MCF 10A (cell line): ENCODE measurements at regions of chr2 and their contacts with region 1.

Region 1: GRCh38 chr2:201118121-201118960 is 2.4 kb downstream of the CFLAR start:
- DNase-seq: peak; percentile 98
- H3K4me3 Mint-ChIP-seq: peak overlapping the region; percentile 93
- H3K27ac Mint-ChIP-seq: peak overlapping the region; percentile 98
- H3K4me1 Mint-ChIP-seq: peaks cover 31% of the 10 kb centered on the region
- H3K27me3 Mint-ChIP-seq: no peaks in the 10 kb centered on the region
- CTCF ChIP-seq: peak; percentile 36

Region 2: GRCh38 chr2:200888704-200889625 is 229.4 kb before region 1 on chr2 and contains the starts of genes NIF3L1 and PPIL3:
- CTCF ChIA-PET with region 1: no interaction called
- POLR2A ChIA-PET with region 1: interaction called, 18 read pairs
- intact Hi-C with region 1: no loop called
- DNase-seq: peak; percentile 98
- H3K4me3 Mint-ChIP-seq: peak within 1 kb of the TSS; percentile 98
- H3K27ac Mint-ChIP-seq: peak within 1 kb of the TSS; percentile 98
- H3K4me1 Mint-ChIP-seq: peaks cover 21% of the 10 kb centered on the region
- H3K27me3 Mint-ChIP-seq: no peaks in the 10 kb centered on the region
- CTCF ChIP-seq: no peak
- total RNA-seq, gene NIF3L1: 19.3 and 26.1 TPM in 2 replicates
- total RNA-seq, gene PPIL3: 33.9 and 35.4 TPM in 2 replicates

Region 3: DNA sequence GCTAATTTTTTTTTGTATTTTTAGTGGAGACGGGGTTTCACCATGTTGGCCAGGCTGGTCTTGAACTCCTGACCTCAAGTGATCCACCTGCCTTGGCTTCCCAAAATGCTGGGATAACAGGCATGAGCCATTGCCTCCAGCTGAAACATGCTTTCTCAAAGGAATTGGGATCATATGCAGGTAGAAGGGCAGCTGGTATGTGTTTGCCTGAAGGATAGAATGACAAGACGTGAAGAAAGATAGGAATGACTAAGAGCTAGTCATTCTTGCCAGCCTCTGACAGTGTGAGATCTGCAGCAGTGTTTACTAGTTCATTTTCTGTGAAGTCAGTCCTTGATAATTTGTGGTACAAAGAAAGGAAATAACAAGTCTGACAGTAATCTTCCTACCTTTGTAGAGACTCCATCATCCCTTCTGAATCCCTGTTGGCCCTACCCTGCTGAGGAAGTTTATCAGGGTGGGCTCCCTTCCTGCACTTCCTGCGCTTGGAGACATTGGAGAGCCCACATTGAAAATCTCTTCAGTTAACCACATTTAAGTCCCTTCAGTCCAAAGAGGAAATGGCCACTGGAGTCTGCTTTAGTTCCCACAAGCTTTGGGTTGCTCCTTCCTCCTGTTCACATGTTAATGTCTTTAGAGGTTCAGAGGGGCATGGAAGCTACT is 12.3 kb after region 1 on chr2:
- CTCF ChIA-PET with region 1: interaction called, 28 read pairs
- POLR2A ChIA-PET with region 1: interaction called, 10 read pairs
- intact Hi-C with region 1: no loop called
- DNase-seq: peak; percentile 78
- H3K4me3 Mint-ChIP-seq: no peak overlapping the region
- H3K27ac Mint-ChIP-seq: peak overlapping the region; percentile 63
- H3K4me1 Mint-ChIP-seq: peaks cover 48% of the 10 kb centered on the region
- H3K27me3 Mint-ChIP-seq: no peaks in the 10 kb centered on the region
- CTCF ChIP-seq: no peak

Region 4: GRCh38 chr2:201151127-201151981 is 33.0 kb after region 1 on chr2:
- CTCF ChIA-PET with region 1: interaction called, 35 read pairs
- POLR2A ChIA-PET with region 1: interaction called, 198 read pairs
- intact Hi-C with region 1: loop called (anchors 1 kb)
- DNase-seq: peak; percentile 72
- H3K4me3 Mint-ChIP-seq: peak overlapping the region; percentile 46
- H3K27ac Mint-ChIP-seq: peak overlapping the region; percentile 97
- H3K4me1 Mint-ChIP-seq: peaks cover 45% of the 10 kb centered on the region
- H3K27me3 Mint-ChIP-seq: no peaks in the 10 kb centered on the region
- CTCF ChIP-seq: no peak

Region 5: DNA sequence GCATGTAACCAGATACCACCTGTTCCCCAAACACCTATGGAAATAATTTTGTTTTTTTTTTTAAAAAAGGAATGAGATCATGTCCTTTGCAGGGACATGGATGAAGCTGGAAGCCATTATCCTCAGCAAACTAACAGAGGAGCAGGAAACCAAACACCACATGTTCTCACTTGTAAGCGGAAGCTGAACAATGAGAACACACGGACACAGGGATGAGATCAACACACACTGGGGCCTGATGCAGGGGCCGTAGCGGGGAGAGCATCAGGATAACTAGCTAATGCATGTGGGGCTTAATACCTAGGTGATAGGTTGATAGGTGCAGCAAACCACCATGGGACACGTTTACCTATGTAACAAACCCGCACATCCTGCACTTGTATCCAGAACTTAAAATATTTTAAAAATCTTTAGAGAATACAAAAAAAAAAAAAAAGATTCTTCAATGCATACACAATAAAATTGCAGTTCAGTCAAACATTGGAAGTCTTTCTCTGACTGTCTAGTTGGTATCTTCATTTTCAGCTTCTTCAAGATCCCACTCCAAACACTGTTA is 53.0 kb after region 1 on chr2:
- CTCF ChIA-PET with region 1: interaction called, 6 read pairs
- POLR2A ChIA-PET with region 1: interaction called, 14 read pairs
- intact Hi-C with region 1: no loop called
- DNase-seq: no peak
- H3K4me3 Mint-ChIP-seq: no peak overlapping the region
- H3K27ac Mint-ChIP-seq: no peak overlapping the region
- H3K4me1 Mint-ChIP-seq: no peaks in the 10 kb centered on the region
- H3K27me3 Mint-ChIP-seq: no peaks in the 10 kb centered on the region
- CTCF ChIP-seq: no peak

Region 6: GRCh38 chr2:201185863-201186262 is 67.5 kb after region 1 on chr2:
- CTCF ChIA-PET with region 1: no interaction called
- POLR2A ChIA-PET with region 1: no interaction called
- intact Hi-C with region 1: no loop called
- DNase-seq: no peak
- H3K4me3 Mint-ChIP-seq: no peak overlapping the region
- H3K27ac Mint-ChIP-seq: no peak overlapping the region
- H3K4me1 Mint-ChIP-seq: no peaks in the 10 kb centered on the region
- H3K27me3 Mint-ChIP-seq: no peaks in the 10 kb centered on the region
- CTCF ChIP-seq: no peak